HAP-1 (cell line): ENCODE measurements at regions of chr1 and their contacts with region 1.

Region 1: GRCh38 chr1:23539698-23540266 is 8.7 kb upstream of the E2F2 start:
- DNase-seq: peak; percentile 93 to 94
- H3K4me3 ChIP-seq: peak overlapping the region; percentile 9; the same call in 1 of the 2 replicates
- H3K4me1 ChIP-seq: peaks cover 4% of the 10 kb centered on the region
- H3K27me3 ChIP-seq: peaks cover 3% of the 10 kb centered on the region; the same call in 1 of the 2 replicates

Region 2: DNA sequence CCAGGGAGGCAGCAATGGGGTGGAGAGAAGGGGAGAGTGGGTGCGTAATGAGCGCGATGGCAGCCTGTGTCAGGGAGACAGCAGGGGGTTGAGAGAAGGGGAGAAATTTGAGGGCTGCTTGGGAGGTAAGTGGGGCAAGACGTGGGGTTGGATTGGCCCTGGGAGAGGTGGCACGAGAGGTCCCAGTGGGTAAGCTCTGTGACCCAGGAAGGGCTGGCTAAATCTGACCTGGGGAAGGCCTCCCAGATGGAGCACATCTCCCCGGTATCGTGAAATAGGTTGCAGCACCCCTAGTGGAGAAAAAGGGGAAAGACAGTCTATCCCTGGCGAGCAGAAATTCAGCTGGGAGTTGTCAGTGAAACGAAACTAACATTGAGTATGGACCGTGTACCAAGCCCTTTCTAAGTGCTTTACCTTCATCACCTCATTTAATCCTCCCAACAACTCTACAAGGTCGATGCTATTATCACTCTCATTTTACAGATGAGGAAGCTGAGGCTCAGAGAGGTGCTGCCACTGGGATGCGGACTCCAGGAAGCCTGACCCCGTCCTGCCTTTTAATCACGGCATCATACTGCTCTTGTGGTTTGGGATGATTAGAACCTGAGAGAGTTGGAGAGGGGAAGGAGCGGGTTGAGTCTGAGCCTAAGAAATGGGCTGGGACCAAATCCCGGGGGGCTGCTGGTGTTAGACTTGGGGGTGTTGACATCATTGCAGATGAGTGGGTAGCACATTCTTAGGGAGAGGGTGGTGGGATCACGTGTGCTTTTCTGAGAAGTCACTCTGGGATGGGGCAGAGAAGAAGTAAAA is 95.3 kb after region 1 on chr1:
- in situ Hi-C with region 1: loop called (anchors 5 kb)
- DNase-seq: peak; percentile 73 to 79
- H3K4me3 ChIP-seq: peak overlapping the region; percentile 22
- H3K4me1 ChIP-seq: peaks cover 3% of the 10 kb centered on the region; the same call in 1 of the 2 replicates
- H3K27me3 ChIP-seq: no peaks in the 10 kb centered on the region

Region 3: GRCh38 chr1:23751050-23751814 is 211.4 kb after region 1 on chr1:
- in situ Hi-C with region 1: loop called (anchors 10 kb)
- DNase-seq: peak; percentile 54 to 63
- H3K4me3 ChIP-seq: no peak overlapping the region
- H3K4me1 ChIP-seq: no peaks in the 10 kb centered on the region
- H3K27me3 ChIP-seq: no peaks in the 10 kb centered on the region